K562 (cell line): ENCODE measurements at regions of chr4 and their contacts with region 1.

Region 1: DNA sequence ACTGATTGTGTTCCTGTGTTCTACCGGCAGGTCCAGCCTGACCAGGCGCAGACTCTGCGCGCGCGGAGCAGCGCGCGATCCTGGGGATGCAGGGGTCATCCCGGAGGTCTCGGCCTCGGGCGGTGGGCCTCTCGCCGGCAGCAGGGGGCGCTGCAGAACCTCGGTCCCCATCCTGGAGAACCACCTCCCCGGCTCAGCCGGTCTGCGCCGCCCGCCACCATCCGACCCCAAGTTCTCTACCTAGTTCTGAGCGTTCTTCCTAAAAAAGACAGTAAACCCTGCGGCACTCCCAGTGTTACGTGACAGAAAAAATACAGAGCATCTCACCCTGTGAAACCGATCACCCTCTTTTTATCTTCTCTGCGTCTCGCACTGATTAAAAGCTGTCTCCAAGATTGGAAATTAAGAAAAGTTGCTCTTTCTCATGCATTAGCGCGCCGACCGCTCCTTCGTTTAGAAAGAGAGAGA is 1.6 kb downstream of the TRPC3 start:
- DNase-seq: peak; percentile 74 to 79 (median 78)
- ATAC-seq: peak; percentile 94
- H3K4me3 ChIP-seq: peak overlapping the region; percentile 41; the same call in 1 of the 2 replicates
- H3K27ac ChIP-seq: no peak overlapping the region
- H3K4me1 ChIP-seq: peaks cover 0 to 20% of the 10 kb centered on the region in 2 experiments; a peak in 2 of 5 replicates
- H3K27me3 ChIP-seq: peaks cover 6 to 24% of the 10 kb centered on the region in 2 experiments; a peak in 4 of 5 replicates
- CTCF ChIP-seq: peak; percentile 68 to 80 (median 79)
- EP300 ChIP-seq: no peak
- POLR2A ChIP-seq: no peak
- RAD21 ChIP-seq: peak; percentile 64 to 78

Region 2: DNA sequence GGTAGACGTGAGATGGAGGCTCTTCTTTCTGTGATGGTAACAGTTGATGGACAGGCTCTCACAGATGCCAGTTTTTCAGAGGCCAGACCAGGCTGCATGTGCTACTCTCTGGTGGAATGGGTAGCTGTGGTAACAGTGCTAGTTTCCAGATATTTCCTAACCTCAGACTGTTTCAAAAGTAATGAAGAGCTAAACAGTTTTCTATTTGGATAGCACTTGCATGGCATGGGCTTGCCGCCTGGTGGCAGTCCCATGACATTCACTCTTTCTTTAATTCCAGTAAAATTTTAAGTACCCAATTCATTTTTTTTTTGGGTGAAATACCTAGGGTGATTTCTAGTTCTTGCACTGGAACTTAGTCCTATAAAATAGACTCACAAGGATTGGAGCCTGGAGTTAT is 1663.4 kb before region 1 on chr4:
- CTCF ChIA-PET with region 1: no interaction called
- POLR2A ChIA-PET with region 1: no interaction called
- in situ Hi-C with region 1: no loop called
- intact Hi-C with region 1: no loop called
- DNase-seq: no peak
- ATAC-seq: no peak
- H3K4me3 ChIP-seq: no peak overlapping the region
- H3K27ac ChIP-seq: no peak overlapping the region
- H3K4me1 ChIP-seq: no peaks in the 10 kb centered on the region
- H3K27me3 ChIP-seq: no peaks in the 10 kb centered on the region
- CTCF ChIP-seq: no peak
- EP300 ChIP-seq: no peak
- POLR2A ChIP-seq: no peak
- RAD21 ChIP-seq: no peak

Region 3: GRCh38 chr4:121932212-121932974 is 17.9 kb before region 1 on chr4:
- CTCF ChIA-PET with region 1: no interaction called
- POLR2A ChIA-PET with region 1: no interaction called
- in situ Hi-C with region 1: no loop called
- intact Hi-C with region 1: no loop called
- DNase-seq: no peak
- ATAC-seq: peak; percentile 29; the same call in 1 of the 3 replicates
- H3K4me3 ChIP-seq: no peak overlapping the region
- H3K27ac ChIP-seq: no peak overlapping the region
- H3K4me1 ChIP-seq: peaks cover 0 to 8% of the 10 kb centered on the region in 2 experiments; a peak in 1 of 5 replicates
- H3K27me3 ChIP-seq: peaks cover 21 to 23% of the 10 kb centered on the region in 2 experiments
- CTCF ChIP-seq: no peak
- EP300 ChIP-seq: no peak
- POLR2A ChIP-seq: no peak
- RAD21 ChIP-seq: no peak

Region 4: GRCh38 chr4:122003335-122003734 is 53.1 kb after region 1 on chr4:
- CTCF ChIA-PET with region 1: no interaction called
- POLR2A ChIA-PET with region 1: no interaction called
- in situ Hi-C with region 1: no loop called
- intact Hi-C with region 1: loop called (anchors 1 kb)
- DNase-seq: peak; percentile 78 to 84 (median 82)
- ATAC-seq: peak; percentile 96
- H3K4me3 ChIP-seq: no peak overlapping the region
- H3K27ac ChIP-seq: no peak overlapping the region
- H3K4me1 ChIP-seq: no peaks in the 10 kb centered on the region
- H3K27me3 ChIP-seq: no peaks in the 10 kb centered on the region; a peak in 1 of 5 replicates
- CTCF ChIP-seq: peak; percentile 75 to 84 (median 81)
- EP300 ChIP-seq: no peak
- POLR2A ChIP-seq: no peak
- RAD21 ChIP-seq: peak; percentile 64 to 84

Region 5: GRCh38 chr4:122151982-122152710 is 201.9 kb after region 1 on chr4 and contains the start of gene BLTP1:
- CTCF ChIA-PET with region 1: no interaction called
- POLR2A ChIA-PET with region 1: no interaction called
- in situ Hi-C with region 1: no loop called
- intact Hi-C with region 1: loop called (anchors 5 kb)
- DNase-seq: peak; percentile 93 to 96 (median 94)
- ATAC-seq: peak; percentile 99
- H3K4me3 ChIP-seq: peak within 1 kb of the TSS; percentile 96
- H3K27ac ChIP-seq: peak within 1 kb of the TSS; percentile 71
- H3K4me1 ChIP-seq: peaks cover 2 to 5% of the 10 kb centered on the region in 2 experiments; a peak in 3 of 5 replicates
- H3K27me3 ChIP-seq: no peaks in the 10 kb centered on the region
- CTCF ChIP-seq: peak in 1 of 3 experiments; percentile 19; a peak in 1 of 6 replicates
- EP300 ChIP-seq: no peak
- POLR2A ChIP-seq: peak; percentile 88
- RAD21 ChIP-seq: no peak
- polyA plus RNA-seq, gene BLTP1: 2.8 to 4.5 TPM

Region 6: GRCh38 chr4:122224348-122224747 is 274.1 kb after region 1 on chr4:
- CTCF ChIA-PET with region 1: no interaction called
- POLR2A ChIA-PET with region 1: no interaction called
- in situ Hi-C with region 1: no loop called
- intact Hi-C with region 1: loop called (anchors 2 kb)
- DNase-seq: peak; percentile 8 to 31 (median 10)
- ATAC-seq: peak; percentile 75; the same call in 2 of the 3 replicates
- H3K4me3 ChIP-seq: no peak overlapping the region
- H3K27ac ChIP-seq: no peak overlapping the region
- H3K4me1 ChIP-seq: no peaks in the 10 kb centered on the region
- H3K27me3 ChIP-seq: no peaks in the 10 kb centered on the region
- CTCF ChIP-seq: peak; percentile 37 to 47 (median 46); a peak in 5 of 6 replicates
- EP300 ChIP-seq: no peak
- POLR2A ChIP-seq: no peak
- RAD21 ChIP-seq: peak in 1 of 2 experiments; percentile 29; a peak in 2 of 4 replicates

Region 7: GRCh38 chr4:122259849-122260248 is 309.6 kb after region 1 on chr4:
- CTCF ChIA-PET with region 1: no interaction called
- POLR2A ChIA-PET with region 1: no interaction called
- in situ Hi-C with region 1: no loop called
- intact Hi-C with region 1: no loop called
- DNase-seq: no peak
- ATAC-seq: no peak
- H3K4me3 ChIP-seq: no peak overlapping the region
- H3K27ac ChIP-seq: no peak overlapping the region
- H3K4me1 ChIP-seq: no peaks in the 10 kb centered on the region
- H3K27me3 ChIP-seq: no peaks in the 10 kb centered on the region
- CTCF ChIP-seq: no peak
- EP300 ChIP-seq: no peak
- POLR2A ChIP-seq: no peak
- RAD21 ChIP-seq: no peak

Region 8: DNA sequence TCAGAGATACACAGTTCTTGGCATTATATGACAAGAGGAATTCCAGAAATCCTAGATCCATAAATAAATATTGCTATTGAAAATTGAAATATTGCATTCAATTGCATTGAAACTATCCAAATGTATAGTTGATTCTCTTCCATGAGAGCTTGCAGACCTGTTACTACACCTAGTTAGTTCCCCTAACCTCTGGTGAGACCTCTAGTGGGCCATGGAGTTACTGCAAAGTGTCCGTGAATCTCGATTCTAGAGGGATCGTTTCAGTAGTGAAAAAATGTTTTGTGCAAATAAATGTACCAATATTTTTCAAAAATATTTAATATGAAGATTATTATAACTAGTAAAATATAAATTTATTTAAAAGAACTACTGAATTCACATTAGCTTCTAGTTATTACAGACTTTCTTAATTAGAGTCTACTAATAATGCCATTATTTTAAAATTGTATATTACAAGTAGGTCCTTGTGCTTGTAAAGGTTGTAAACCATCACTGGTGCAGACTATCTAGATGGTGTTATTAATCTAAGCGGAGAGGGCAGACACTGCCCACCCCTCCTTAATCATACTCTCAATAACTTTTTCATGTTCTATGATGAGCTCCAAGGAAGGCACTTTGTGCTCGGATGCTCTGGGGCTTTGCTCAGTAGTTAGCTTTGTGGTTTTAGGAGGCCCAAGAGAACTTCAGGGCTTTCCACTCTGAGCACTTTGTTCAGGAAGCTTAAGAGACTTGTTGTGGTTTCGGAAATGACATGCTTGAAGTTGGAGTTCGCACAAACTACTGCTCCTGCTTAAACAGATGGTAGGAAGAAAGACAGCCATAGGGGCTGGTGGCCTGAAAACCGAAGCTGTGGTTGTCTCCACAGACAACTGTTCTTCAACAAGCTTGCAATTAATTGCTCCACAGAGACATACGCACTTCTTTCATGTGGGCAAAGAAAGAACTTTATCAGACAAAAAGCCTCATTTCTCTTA is 627.8 kb after region 1 on chr4:
- CTCF ChIA-PET with region 1: interaction called, 3 read pairs
- POLR2A ChIA-PET with region 1: no interaction called
- in situ Hi-C with region 1: no loop called
- intact Hi-C with region 1: loop called (anchors 2 kb)
- DNase-seq: peak; percentile 63 to 70 (median 67)
- ATAC-seq: peak; percentile 95
- H3K4me3 ChIP-seq: no peak overlapping the region
- H3K27ac ChIP-seq: no peak overlapping the region
- H3K4me1 ChIP-seq: no peaks in the 10 kb centered on the region
- H3K27me3 ChIP-seq: no peaks in the 10 kb centered on the region
- CTCF ChIP-seq: peak; percentile 75 to 78 (median 77)
- EP300 ChIP-seq: no peak
- POLR2A ChIP-seq: no peak
- RAD21 ChIP-seq: peak; percentile 53 to 73; a peak in 3 of 4 replicates